GM18951 (cell line): ENCODE measurements at regions of chr7 and their contacts with region 1.

Region 1: GRCh38 chr7:55641273-55641691 is 69.0 kb upstream of the VOPP1 start:
- POLR2A ChIP-seq: no peak

Region 2: GRCh38 chr7:55951637-55952351 is 310.5 kb after region 1 on chr7 and contains the start of gene MRPS17:
- in situ Hi-C with region 1: loop called (anchors 25 kb)
- POLR2A ChIP-seq: peak; percentile 93

Region 3: GRCh38 chr7:56074371-56074791 is 433.1 kb after region 1 on chr7:
- in situ Hi-C with region 1: loop called (anchors 10 kb)
- POLR2A ChIP-seq: no peak